ENCODE measurements at regions of chr2 and their contacts with region 1.

Region 1: DNA sequence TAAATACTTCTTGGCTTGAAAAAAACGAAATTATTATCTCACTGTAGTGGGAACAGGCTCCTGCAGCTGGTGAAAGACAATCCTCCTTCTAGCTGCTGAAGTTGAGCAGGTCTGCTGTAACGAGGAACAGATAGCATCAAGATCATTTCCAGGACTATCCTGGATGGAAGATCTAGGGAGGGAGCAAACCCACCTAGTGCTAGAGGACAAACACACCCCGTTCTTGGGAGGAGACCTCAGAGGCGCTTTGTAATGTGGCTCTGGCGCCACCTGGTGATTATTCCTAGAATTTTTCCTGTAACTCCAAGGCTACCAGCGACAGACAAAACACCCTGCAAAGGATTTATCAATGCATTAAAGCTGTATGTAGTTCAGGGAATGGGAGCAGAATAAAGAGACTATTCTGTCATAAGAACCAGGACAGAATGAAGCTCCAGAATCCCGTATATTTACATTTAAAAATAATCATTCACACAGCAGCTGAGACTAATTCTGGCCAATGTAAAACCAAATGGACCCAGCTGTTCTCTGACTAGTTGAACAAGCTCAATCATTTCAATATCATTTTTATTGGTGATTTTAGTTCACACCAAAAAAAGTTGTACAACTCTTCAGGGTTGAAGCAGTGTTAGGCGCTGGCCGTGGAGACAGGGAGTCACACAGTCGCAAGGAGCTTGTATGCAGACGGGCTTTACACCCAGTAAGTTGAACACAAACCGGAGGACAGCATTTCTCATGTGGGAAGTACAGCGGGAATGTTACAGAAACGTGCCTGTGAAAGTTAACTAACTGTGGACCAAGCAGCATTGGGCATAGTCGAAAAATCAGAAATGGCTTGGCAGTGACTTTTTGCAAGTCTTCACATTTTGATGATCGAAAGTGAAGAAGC is 290.3 kb downstream of the TRIB2 start:
- DNase-seq: peak in 1 of 2 donors; percentile 78
- H3K4me3 ChIP-seq: peak overlapping the region; percentile 3 to 9
- H3K27ac ChIP-seq: no peak overlapping the region
- H3K4me1 ChIP-seq: no peaks in the 10 kb centered on the region
- H3K27me3 ChIP-seq: no peaks in the 10 kb centered on the region
- CTCF ChIP-seq: peak; percentile 73 to 90 (median 79)

Region 2: DNA sequence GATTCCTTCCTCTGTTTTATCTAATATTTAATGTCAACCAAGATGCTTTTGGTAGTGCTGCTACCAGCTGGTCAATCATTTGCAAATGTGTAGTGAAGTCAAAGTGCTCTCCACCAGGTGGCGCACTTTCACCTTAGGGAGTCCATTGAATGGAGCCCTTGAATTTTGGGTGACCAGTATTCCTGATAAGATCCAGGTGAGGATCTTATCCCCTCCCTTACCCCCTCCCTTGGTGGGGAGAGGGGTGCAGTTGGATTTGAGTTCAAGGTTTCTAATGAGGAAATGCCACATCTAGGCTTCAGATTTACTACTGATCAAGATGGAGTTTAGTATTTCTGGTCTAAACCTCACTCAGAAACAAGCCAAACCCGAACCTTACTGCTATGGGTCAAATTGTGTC is 1529.1 kb before region 1 on chr2:
- intact Hi-C with region 1: loop called (anchors 5 kb)
- DNase-seq: peak; percentile 33 to 92
- H3K4me3 ChIP-seq: no peak overlapping the region
- H3K27ac ChIP-seq: no peak overlapping the region
- H3K4me1 ChIP-seq: no peaks in the 10 kb centered on the region
- H3K27me3 ChIP-seq: peaks cover 12% of the 10 kb centered on the region
- CTCF ChIP-seq: peak; percentile 68 to 83 (median 82)

Region 3: DNA sequence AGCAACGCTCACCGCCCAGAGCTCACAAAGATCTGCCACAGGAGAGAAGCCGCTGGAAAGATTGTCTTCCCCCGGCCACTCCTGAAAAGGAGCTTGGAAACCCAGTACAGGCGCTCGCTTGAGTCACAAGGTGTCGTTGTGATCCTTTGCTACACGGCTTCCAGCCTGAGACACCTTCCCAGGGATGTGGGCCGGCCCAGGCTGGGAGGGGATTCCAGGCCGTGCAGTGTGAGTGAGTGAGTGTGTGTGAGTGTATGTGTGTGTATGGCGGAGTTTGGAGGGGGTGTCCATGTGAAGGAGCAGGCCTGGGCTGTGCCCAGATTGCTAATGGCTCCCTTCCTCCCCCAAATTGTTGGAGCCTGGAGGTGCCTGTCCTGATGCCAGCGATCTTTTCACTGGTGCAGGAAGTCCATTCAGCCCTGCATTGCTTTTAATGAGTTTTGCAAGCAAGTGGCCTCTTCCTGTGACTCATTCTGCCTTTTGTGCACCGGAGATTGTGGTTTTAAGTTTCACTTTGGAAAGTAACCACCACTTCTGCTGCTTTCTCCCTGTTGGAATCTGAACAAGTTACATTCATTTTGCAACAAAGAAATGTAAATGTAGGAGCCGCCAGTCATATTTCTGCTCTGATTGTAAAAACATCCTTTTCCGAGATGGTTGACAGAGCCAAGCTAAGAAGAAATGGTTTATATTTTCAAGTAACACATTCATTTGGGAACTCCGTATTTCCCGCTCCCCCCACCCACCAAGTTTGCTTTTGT is 1176.9 kb before region 1 on chr2:
- intact Hi-C with region 1: loop called (anchors 2 kb)
- DNase-seq: peak; percentile 24 to 82
- H3K4me3 ChIP-seq: peak overlapping the region; percentile 55
- H3K27ac ChIP-seq: peak overlapping the region; percentile 69 to 89
- H3K4me1 ChIP-seq: peaks cover 4 to 17% of the 10 kb centered on the region in 2 donors
- H3K27me3 ChIP-seq: no peaks in the 10 kb centered on the region
- CTCF ChIP-seq: peak in 1 of 3 experiments; percentile 35

Region 4: DNA sequence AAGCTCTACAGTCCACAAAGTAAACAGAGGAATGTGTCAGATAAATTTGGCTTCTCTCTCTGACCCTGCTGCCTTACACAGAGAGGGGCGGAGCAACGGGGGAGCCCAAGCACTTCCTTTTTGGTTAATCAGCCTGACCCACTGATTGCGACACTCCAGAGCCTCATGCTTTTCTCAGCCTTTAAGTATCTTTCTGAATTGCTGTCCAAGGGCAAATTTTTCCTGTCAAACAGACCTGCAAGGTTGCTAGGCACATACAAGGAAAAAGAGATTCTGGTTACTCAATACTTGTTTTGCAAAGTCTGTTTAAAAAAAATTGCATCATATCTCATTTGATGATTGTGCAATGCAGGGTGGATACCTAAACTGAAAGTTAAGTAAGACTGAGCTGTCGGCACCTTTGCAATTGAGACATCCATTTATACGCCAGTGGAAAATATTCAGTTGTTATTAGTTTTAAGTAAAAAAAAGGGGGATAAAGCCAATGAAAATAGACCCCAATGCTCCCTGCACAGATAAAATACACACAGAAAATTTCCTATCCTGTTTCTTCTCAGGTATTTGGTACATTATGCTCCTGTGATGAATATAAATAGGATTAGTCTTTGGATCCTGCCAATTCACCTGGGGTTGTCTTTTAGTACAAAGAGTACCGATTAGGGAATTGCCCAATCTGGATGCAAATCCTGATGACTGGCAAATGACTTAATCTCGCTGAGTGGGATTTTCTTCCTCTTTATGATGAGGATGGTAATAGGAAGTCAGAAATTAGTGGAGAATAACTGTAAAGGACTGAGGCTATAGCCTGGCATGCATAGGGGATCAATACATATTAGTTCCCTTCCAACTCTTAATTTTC is 550.6 kb before region 1 on chr2:
- intact Hi-C with region 1: loop called (anchors 10 kb)
- DNase-seq: peak; percentile 68 to 96
- H3K4me3 ChIP-seq: peak overlapping the region in 1 of 2 donors; percentile 10
- H3K27ac ChIP-seq: peak overlapping the region; percentile 8 to 51
- H3K4me1 ChIP-seq: peaks cover 3 to 13% of the 10 kb centered on the region in 2 donors
- H3K27me3 ChIP-seq: no peaks in the 10 kb centered on the region
- CTCF ChIP-seq: no peak

Region 5: GRCh38 chr2:12636837-12637581 is 370.1 kb before region 1 on chr2:
- intact Hi-C with region 1: no loop called
- DNase-seq: no peak
- H3K4me3 ChIP-seq: no peak overlapping the region
- H3K27ac ChIP-seq: peak overlapping the region in 1 of 2 donors; percentile 35
- H3K4me1 ChIP-seq: peaks cover 0 to 8% of the 10 kb centered on the region in 2 donors
- H3K27me3 ChIP-seq: no peaks in the 10 kb centered on the region
- CTCF ChIP-seq: no peak

Region 6: DNA sequence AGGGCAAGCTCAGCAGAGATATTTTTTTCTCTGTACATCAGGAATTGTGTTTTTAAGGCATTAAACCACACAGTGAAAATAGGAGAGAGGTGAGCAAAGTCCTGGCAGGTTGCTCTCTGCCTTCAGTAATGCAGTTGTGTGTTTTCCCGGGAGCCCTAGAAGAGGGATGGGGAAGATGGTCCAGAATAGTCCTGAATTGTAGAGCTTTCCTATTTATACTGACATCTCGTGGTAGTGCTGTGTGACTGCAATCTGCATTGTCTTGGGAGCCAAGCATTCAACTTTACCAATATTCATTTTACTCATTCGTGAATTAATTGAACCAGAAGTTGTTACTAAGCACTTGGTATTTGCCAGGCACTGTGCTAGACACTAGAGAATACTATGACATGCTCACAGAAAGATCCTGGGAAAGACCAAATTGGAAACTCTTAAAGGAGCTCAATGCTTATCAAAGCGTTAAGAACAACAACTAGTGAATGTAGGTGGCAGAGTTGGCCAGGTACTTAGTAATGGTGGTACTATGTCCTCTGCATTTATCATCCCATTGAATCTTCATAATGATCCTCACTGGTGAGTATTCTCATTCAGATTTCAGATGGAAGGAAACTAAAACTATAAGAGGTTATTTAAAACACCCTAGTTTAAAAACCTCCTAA is 75.8 kb before region 1 on chr2:
- intact Hi-C with region 1: loop called (anchors 5 kb)
- DNase-seq: no peak
- H3K4me3 ChIP-seq: no peak overlapping the region
- H3K27ac ChIP-seq: no peak overlapping the region
- H3K4me1 ChIP-seq: no peaks in the 10 kb centered on the region
- H3K27me3 ChIP-seq: no peaks in the 10 kb centered on the region
- CTCF ChIP-seq: peak; percentile 65 to 94 (median 83)

Measured in ascending aorta (tissue), 2 donors.